T-cell (primary cell): ENCODE measurements at regions of chr13 and their contacts with region 1.

Region 1: GRCh38 chr13:44035400-44035799 is 155.7 kb downstream of the LACC1 start:
- DNase-seq: no peak
- ATAC-seq: no peak
- H3K4me3 ChIP-seq: no peak overlapping the region
- H3K4me3 Mint-ChIP-seq: no peak overlapping the region
- H3K27ac ChIP-seq: no peak overlapping the region
- H3K27ac Mint-ChIP-seq: no peak overlapping the region
- H3K4me1 ChIP-seq: no peaks in the 10 kb centered on the region
- H3K4me1 Mint-ChIP-seq: no peaks in the 10 kb centered on the region
- H3K27me3 ChIP-seq: peaks cover 0 to 4% of the 10 kb centered on the region in 2 experiments
- H3K27me3 Mint-ChIP-seq: peaks cover 9 to 16% of the 10 kb centered on the region in 2 donors

Region 2: DNA sequence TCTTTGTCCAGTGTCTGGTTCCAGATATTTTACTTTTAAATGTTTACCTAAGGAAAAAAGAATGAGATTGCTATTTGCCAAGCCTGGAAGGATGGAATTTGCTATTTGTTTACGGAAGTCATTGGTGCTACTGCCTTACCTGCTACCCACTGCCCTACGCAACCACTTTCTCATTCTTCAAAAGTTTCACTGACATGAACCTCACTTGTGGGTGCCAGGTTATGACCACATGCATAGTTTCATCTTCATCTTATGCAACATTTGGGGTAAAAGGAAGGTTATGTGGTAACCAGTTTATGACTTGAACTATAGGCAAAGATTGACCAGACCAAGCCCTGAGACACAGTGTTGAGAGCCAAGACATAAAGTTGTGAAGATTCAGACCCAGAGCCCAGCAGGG is 13.2 kb before region 1 on chr13:
- CTCF ChIA-PET with region 1: no interaction called
- POLR2A ChIA-PET with region 1: no interaction called
- DNase-seq: no peak
- ATAC-seq: no peak
- H3K4me3 ChIP-seq: no peak overlapping the region
- H3K4me3 Mint-ChIP-seq: no peak overlapping the region
- H3K27ac ChIP-seq: no peak overlapping the region
- H3K27ac Mint-ChIP-seq: no peak overlapping the region
- H3K4me1 ChIP-seq: no peaks in the 10 kb centered on the region
- H3K4me1 Mint-ChIP-seq: peaks cover 0 to 8% (median 2%) of the 10 kb centered on the region in 3 donors
- H3K27me3 ChIP-seq: no peaks in the 10 kb centered on the region
- H3K27me3 Mint-ChIP-seq: peaks cover 3 to 10% of the 10 kb centered on the region in 2 donors

Region 3: DNA sequence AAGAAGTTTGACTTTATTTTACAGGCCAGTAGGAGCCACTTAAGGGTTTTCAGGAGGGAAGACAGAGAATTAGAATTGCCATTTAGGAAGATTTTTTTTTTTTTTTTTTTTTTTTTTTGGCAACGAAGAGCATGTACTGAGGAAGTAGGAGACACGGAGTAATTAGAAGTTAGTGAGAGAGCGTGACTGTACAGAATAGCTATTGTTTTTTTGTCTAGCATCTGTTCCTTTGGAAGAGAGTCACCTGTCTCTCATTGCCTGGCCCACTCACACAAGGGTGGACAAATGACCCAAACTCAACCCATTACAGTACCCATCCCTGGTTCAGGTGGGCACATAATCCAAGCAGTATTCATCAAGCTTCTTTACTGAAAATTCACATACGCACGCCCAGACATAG is 11.0 kb after region 1 on chr13:
- CTCF ChIA-PET with region 1: interaction called in 1 of 2 experiments, 3 read pairs
- POLR2A ChIA-PET with region 1: interaction called, 3 to 11 read pairs
- DNase-seq: no peak
- ATAC-seq: no peak
- H3K4me3 ChIP-seq: no peak overlapping the region
- H3K4me3 Mint-ChIP-seq: no peak overlapping the region
- H3K27ac ChIP-seq: no peak overlapping the region
- H3K27ac Mint-ChIP-seq: no peak overlapping the region
- H3K4me1 ChIP-seq: no peaks in the 10 kb centered on the region
- H3K4me1 Mint-ChIP-seq: no peaks in the 10 kb centered on the region
- H3K27me3 ChIP-seq: peaks cover 0 to 5% of the 10 kb centered on the region in 2 experiments
- H3K27me3 Mint-ChIP-seq: peaks cover 18 to 22% of the 10 kb centered on the region in 2 donors

Region 4: DNA sequence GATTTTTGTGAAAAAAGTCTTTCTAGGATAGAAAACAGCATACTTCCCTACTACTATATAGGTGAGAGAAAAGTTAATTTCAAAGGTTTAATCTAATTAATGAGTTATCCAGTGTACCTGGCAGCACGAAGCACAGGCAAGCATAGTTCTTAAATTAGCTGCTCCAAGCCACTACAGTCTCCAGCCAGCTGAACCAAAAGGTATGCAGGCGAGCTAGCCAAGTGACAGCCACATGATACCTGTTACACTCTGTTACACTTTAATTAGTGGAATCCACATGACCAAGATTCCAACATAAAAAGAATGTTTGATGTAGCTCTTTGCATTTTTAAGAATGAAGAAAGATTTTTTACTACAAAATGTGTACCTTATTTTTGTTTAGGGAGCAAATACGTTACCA is 1367.2 kb after region 1 on chr13:
- CTCF ChIA-PET with region 1: no interaction called
- POLR2A ChIA-PET with region 1: no interaction called
- DNase-seq: no peak
- ATAC-seq: no peak
- H3K4me3 ChIP-seq: no peak overlapping the region
- H3K4me3 Mint-ChIP-seq: no peak overlapping the region
- H3K27ac ChIP-seq: no peak overlapping the region
- H3K27ac Mint-ChIP-seq: peak overlapping the region; percentile 2 to 70
- H3K4me1 ChIP-seq: peaks cover 4 to 8% of the 10 kb centered on the region in 2 experiments
- H3K4me1 Mint-ChIP-seq: peaks cover 27 to 36% (median 28%) of the 10 kb centered on the region in 3 donors
- H3K27me3 ChIP-seq: no peaks in the 10 kb centered on the region
- H3K27me3 Mint-ChIP-seq: no peaks in the 10 kb centered on the region